Naive thymus-derived CD4-positive, alpha-beta T cell (primary cell): ENCODE measurements at regions of chr16 and their contacts with region 1.

Region 1: DNA sequence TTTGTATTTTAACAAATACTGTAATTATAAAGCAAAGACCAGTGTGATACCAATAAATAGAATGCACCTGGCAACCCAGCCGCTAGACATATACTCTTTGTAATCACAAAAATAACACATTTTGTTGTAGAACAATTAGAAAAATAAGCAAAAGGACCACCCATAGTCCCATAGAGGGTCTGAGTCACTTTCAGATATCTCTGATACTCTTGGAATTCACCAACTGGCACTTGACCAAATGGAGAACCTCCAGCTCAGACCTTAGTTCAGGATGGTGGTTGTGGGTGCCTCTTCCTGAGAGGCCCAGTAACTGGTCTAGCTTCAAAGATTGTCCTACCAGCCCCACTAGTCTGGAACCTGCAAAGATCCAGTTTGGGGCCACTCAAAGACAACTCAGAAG is 789 bp upstream of the TERF2 start:
- DNase-seq: no peak
- ATAC-seq: no peak
- H3K4me3 ChIP-seq: no peak overlapping the region
- H3K4me3 Mint-ChIP-seq: peak overlapping the region in 8 of 10 donors; percentile 86 to 96 (median 92)
- H3K27ac ChIP-seq: peak overlapping the region; percentile 95
- H3K27ac Mint-ChIP-seq: peak overlapping the region in 6 of 9 donors; percentile 90 to 99 (median 95)
- H3K4me1 ChIP-seq: peaks cover 10 to 27% of the 10 kb centered on the region in 2 donors
- H3K4me1 Mint-ChIP-seq: peaks cover 22 to 37% (median 35%) of the 10 kb centered on the region in 7 donors
- H3K27me3 ChIP-seq: no peaks in the 10 kb centered on the region
- H3K27me3 Mint-ChIP-seq: no peaks in the 10 kb centered on the region

Region 2: GRCh38 chr16:69273009-69273408 is 113.6 kb before region 1 on chr16:
- CTCF ChIA-PET with region 1: no interaction called
- POLR2A ChIA-PET with region 1: no interaction called
- intact Hi-C with region 1: no loop called
- DNase-seq: no peak
- ATAC-seq: no peak
- H3K4me3 ChIP-seq: no peak overlapping the region
- H3K4me3 Mint-ChIP-seq: no peak overlapping the region
- H3K27ac ChIP-seq: no peak overlapping the region
- H3K27ac Mint-ChIP-seq: no peak overlapping the region
- H3K4me1 ChIP-seq: no peaks in the 10 kb centered on the region
- H3K4me1 Mint-ChIP-seq: peaks cover 0 to 4% (median 0%) of the 10 kb centered on the region in 7 donors
- H3K27me3 ChIP-seq: no peaks in the 10 kb centered on the region
- H3K27me3 Mint-ChIP-seq: no peaks in the 10 kb centered on the region

Region 3: DNA sequence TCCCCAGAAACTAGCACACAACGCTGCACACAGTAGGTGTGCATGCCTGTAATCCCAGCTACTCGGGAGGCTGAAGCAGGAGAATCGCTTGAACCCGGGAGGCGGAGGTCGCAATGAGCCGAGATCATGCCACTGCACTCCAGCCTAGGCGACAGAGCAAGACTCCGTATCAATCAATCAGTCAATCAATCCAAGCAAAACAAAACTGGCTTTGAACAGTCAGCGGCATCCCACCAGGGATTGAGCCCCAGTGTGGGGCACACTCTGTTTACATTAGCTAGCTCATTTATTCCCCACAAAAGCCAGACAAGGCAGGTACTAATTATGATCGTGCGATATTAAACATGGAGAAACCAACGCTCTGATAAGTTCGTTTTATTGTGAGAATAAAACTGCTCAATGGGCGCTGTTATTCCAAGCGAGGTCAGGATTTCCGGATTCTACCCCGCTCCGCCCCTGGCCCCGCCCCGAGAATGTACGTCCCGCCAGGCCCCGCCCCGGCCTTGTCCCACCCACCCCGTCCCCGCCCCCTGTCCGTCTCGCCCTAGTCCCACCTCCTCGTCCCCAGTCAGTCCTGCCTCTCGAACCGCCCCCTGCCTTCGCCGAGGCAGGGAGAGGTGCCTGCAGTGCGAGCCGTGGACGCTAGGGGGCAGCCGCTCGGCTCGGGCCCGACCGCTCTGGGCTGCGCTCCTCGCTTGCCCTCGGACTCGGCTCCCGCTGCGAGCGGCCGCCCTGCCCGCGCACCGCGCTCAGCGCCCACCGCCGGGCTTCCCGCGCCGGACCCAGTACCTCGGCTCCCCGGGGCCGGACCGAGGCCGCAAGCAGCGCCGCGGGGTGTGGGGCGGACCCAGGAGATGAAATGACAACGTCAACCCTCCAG is 75.7 kb before region 1 on chr16 and contains the start of gene VPS4A:
- CTCF ChIA-PET with region 1: no interaction called
- POLR2A ChIA-PET with region 1: interaction called, 3 read pairs
- intact Hi-C with region 1: loop called (anchors 1 kb)
- DNase-seq: peak; percentile 95 to 99 (median 97)
- ATAC-seq: peak; percentile 99
- H3K4me3 ChIP-seq: peak within 1 kb of the TSS; percentile 74
- H3K4me3 Mint-ChIP-seq: peak within 1 kb of the TSS; percentile 90 to 100 (median 99)
- H3K27ac ChIP-seq: peak within 1 kb of the TSS; percentile 94
- H3K27ac Mint-ChIP-seq: peak within 1 kb of the TSS; percentile 92 to 99 (median 95)
- H3K4me1 ChIP-seq: peaks cover 8 to 10% of the 10 kb centered on the region in 2 donors
- H3K4me1 Mint-ChIP-seq: peaks cover 17 to 36% (median 29%) of the 10 kb centered on the region in 7 donors
- H3K27me3 ChIP-seq: no peaks in the 10 kb centered on the region
- H3K27me3 Mint-ChIP-seq: no peaks in the 10 kb centered on the region
- total RNA-seq, gene VPS4A: 36.7 to 53.7 (median 46.9) TPM

Region 4: DNA sequence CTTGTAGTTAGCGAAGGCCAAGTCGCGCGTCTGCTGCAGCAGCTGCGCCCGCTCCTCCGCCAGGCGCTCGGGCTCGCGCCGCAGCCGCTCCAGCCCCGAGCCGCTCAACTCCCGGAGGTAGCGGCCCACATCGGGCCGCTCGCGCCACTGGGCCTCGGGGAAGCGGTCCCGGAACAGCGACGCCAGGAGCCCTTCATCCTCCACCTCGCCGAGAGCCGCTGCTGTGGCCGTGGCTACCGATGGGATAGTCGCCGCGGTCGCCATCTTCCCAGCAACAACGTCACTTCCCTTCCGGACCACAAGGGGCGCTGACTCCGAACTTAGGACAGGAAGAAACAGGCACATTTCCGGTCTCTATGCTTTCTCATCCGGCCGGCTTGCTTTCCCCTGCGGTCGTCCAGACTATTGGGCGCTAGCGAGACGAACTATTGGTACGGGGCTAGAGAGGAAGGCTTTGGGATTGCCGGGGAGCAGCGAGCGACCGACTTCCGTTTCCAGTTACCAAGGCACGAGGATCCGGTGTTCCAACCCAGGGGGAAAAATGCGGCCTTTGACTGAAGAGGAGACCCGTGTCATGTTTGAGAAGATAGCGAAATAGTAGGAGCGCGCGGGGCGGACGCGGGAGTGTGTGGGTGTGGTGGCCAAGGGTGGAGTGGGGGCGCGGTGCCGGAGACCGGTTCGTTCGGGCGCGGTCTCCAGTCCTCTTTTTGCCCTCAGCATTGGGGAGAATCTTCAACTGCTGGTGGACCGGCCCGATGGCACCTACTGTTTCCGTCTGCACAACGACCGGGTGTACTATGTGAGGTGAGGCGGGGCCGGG is 47.1 kb before region 1 on chr16 and contains the starts of genes COG8 and NIP7:
- CTCF ChIA-PET with region 1: no interaction called
- POLR2A ChIA-PET with region 1: interaction called, 14 read pairs
- intact Hi-C with region 1: loop called (anchors 1 kb)
- DNase-seq: peak; percentile 78 to 91 (median 90)
- ATAC-seq: peak; percentile 95
- H3K4me3 ChIP-seq: peak within 1 kb of the TSS; percentile 80
- H3K4me3 Mint-ChIP-seq: peak within 1 kb of the TSS; percentile 97 to 100 (median 99)
- H3K27ac ChIP-seq: peak within 1 kb of the TSS; percentile 86
- H3K27ac Mint-ChIP-seq: peak within 1 kb of the TSS; percentile 95 to 99 (median 98)
- H3K4me1 ChIP-seq: peaks cover 20 to 25% of the 10 kb centered on the region in 2 donors
- H3K4me1 Mint-ChIP-seq: peaks cover 31 to 70% (median 49%) of the 10 kb centered on the region in 7 donors
- H3K27me3 ChIP-seq: no peaks in the 10 kb centered on the region
- H3K27me3 Mint-ChIP-seq: no peaks in the 10 kb centered on the region
- total RNA-seq, gene COG8: 29.5 to 73.7 (median 37.4) TPM
- total RNA-seq, gene NIP7: 22.1 to 40.9 (median 30.3) TPM

Region 5: DNA sequence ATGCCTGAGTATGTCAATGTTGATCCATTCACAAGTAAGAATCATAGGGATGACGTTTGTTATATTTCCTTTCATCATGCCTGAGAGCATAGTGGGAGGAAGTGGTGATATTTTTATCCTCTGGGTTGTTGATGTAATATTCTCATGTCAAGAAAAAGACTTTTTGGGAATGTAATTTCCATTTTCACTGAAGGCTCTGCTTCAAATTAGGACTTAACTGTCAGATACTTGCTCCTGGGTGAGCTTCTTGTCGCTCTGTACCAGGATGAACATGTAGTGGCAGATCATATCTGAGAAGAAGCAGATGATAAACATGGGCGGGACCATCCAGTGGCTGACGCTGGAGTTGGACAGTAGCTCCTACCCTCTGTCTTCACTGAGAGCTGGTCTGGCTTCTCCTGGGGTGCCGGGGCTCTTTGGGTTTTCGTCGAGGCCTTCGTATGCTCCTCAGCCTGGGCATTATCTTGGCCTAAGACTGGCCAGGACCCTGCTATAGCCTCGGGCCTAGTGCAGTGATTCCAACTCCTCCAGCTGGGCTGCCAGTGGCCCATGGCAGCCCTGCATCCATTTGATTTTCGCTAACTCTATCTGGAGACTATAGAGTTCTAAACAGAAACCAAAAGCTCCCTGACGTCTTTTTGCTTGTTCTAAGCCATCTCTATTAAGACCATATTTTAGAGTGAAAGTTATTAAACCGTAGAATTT is 57.5 kb after region 1 on chr16:
- CTCF ChIA-PET with region 1: no interaction called
- POLR2A ChIA-PET with region 1: interaction called, 4 read pairs
- intact Hi-C with region 1: loop called in 1 of 2 experiments (anchors 5 kb)
- DNase-seq: peak in 7 of 9 donors; percentile 1 to 51 (median 35)
- ATAC-seq: peak; percentile 85
- H3K4me3 ChIP-seq: peak overlapping the region; percentile 45
- H3K4me3 Mint-ChIP-seq: peak overlapping the region; percentile 68 to 90 (median 86)
- H3K27ac ChIP-seq: peak overlapping the region; percentile 64
- H3K27ac Mint-ChIP-seq: peak overlapping the region; percentile 86 to 98 (median 96)
- H3K4me1 ChIP-seq: peaks cover 10 to 26% of the 10 kb centered on the region in 2 donors
- H3K4me1 Mint-ChIP-seq: peaks cover 16 to 51% (median 41%) of the 10 kb centered on the region in 7 donors
- H3K27me3 ChIP-seq: no peaks in the 10 kb centered on the region
- H3K27me3 Mint-ChIP-seq: no peaks in the 10 kb centered on the region

Region 6: GRCh38 chr16:69660166-69660565 is 273.6 kb after region 1 on chr16:
- CTCF ChIA-PET with region 1: no interaction called
- POLR2A ChIA-PET with region 1: no interaction called
- intact Hi-C with region 1: no loop called
- DNase-seq: no peak
- ATAC-seq: no peak
- H3K4me3 ChIP-seq: no peak overlapping the region
- H3K4me3 Mint-ChIP-seq: no peak overlapping the region
- H3K27ac ChIP-seq: no peak overlapping the region
- H3K27ac Mint-ChIP-seq: no peak overlapping the region
- H3K4me1 ChIP-seq: no peaks in the 10 kb centered on the region
- H3K4me1 Mint-ChIP-seq: peaks cover 0 to 3% (median 0%) of the 10 kb centered on the region in 7 donors
- H3K27me3 ChIP-seq: no peaks in the 10 kb centered on the region
- H3K27me3 Mint-ChIP-seq: no peaks in the 10 kb centered on the region

Region 7: DNA sequence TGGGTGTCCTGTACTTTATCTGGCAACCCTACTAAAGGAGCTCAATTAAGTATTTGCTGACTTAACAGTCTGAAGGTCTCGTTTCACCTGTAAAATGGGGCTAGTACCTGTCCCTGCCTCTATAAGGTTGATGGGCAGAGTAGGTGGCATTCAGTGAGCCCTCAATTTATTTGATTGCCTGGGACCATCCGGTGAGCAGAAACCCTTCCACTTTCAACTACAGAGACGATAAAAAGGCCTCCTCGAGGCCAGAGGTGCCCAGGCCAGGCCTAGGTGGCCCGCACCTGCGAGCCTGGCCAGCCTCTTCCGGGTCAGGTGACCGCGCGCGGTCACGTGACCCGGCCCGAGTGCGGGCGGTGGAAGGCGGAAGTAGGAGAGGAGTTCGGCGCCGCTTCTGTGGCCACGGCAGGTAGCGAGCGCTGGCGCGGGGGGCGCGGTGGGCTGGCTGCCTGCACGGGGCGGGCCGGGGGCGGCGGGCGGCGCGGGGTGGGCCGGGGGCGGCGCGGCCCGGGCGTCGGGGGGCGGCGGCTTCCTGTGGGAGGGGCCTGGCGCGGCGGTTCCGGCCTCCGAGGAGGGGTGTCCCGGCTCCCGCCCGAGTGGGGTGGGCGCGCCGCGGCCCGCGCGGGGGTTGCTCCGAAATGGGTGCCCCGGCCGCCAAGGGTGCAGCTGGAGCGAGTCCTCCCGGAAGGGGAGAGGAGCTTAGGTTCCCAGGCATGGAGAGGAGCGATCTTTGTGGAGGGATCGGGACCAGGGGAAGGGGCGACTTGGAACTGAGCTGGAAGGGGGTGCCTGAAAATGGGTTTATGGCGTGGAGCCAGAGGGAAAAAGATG is 375.6 kb after region 1 on chr16 and contains the start of gene WWP2:
- CTCF ChIA-PET with region 1: no interaction called
- POLR2A ChIA-PET with region 1: no interaction called
- intact Hi-C with region 1: loop called in 1 of 2 experiments (anchors 1 kb)
- DNase-seq: peak; percentile 68 to 81 (median 77)
- ATAC-seq: peak; percentile 86
- H3K4me3 ChIP-seq: peak within 1 kb of the TSS; percentile 88
- H3K4me3 Mint-ChIP-seq: peak within 1 kb of the TSS; percentile 77 to 96 (median 94)
- H3K27ac ChIP-seq: peak within 1 kb of the TSS; percentile 92
- H3K27ac Mint-ChIP-seq: peak within 1 kb of the TSS; percentile 93 to 99 (median 98)
- H3K4me1 ChIP-seq: peaks cover 10 to 14% of the 10 kb centered on the region in 2 donors
- H3K4me1 Mint-ChIP-seq: peaks cover 16 to 47% (median 37%) of the 10 kb centered on the region in 7 donors
- H3K27me3 ChIP-seq: no peaks in the 10 kb centered on the region
- H3K27me3 Mint-ChIP-seq: peaks cover 0 to 5% (median 0%) of the 10 kb centered on the region in 5 donors
- total RNA-seq, gene WWP2: 58.4 to 81.3 (median 72.1) TPM